AG04449 (cell line): ENCODE measurements at regions of chr7 and their contacts with region 1.

Region 1: GRCh38 chr7:44240983-44241510 is 40.3 kb downstream of the YKT6 start:
- DNase-seq: peak; percentile 5
- H3K4me3 ChIP-seq: peak overlapping the region; percentile 6; the same call in 1 of the 2 replicates
- CTCF ChIP-seq: peak; percentile 94

Region 2: DNA sequence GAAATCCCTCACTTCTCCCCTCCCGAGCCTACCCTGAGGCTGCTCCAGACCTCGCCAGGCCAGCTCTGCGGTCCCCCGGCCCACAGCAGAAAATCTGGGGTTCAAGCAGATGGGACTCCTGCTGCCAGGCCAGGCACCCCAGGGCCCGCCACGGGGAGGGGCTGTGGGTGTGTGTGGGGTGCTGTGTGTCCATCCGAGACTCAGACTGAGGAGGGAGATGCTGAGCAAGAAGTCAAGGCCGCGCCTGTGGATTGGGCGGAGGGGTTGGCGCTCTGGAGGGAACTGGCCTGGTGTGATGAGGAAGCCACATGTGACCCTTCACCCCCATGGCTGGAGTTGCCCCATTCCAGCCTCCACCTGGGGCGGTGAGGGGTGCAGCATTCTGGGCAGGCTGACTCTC is 10.8 kb after region 1 on chr7:
- CTCF ChIA-PET with region 1: interaction called, 40 read pairs
- POLR2A ChIA-PET with region 1: no interaction called
- DNase-seq: no peak
- H3K4me3 ChIP-seq: no peak overlapping the region
- CTCF ChIP-seq: no peak

Region 3: GRCh38 chr7:44307301-44307900 is 66.4 kb after region 1 on chr7:
- CTCF ChIA-PET with region 1: interaction called, 25 read pairs
- POLR2A ChIA-PET with region 1: no interaction called
- DNase-seq: peak; percentile 10
- H3K4me3 ChIP-seq: no peak overlapping the region
- CTCF ChIP-seq: peak; percentile 62

Region 4: DNA sequence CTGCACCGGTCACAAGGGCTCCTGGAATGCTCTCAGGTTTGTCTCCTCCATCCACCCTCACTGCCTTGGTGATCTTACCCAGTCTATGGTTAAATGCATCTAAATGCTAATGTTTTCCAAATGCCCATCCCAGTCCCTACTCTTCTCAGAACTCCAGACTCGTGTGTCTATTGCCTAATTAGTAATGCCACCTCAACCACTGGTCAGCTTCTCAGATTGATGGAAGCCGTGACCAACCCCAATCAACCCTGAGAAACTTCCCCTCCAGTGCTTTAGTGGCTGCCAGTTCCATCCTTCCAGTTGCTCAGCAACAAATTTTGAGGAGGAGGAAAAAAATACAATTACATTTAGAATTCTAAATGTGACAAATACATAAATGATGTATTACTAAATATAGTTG is 230.8 kb after region 1 on chr7:
- CTCF ChIA-PET with region 1: interaction called, 45 read pairs
- POLR2A ChIA-PET with region 1: no interaction called
- DNase-seq: no peak
- H3K4me3 ChIP-seq: no peak overlapping the region
- CTCF ChIP-seq: no peak

Region 5: DNA sequence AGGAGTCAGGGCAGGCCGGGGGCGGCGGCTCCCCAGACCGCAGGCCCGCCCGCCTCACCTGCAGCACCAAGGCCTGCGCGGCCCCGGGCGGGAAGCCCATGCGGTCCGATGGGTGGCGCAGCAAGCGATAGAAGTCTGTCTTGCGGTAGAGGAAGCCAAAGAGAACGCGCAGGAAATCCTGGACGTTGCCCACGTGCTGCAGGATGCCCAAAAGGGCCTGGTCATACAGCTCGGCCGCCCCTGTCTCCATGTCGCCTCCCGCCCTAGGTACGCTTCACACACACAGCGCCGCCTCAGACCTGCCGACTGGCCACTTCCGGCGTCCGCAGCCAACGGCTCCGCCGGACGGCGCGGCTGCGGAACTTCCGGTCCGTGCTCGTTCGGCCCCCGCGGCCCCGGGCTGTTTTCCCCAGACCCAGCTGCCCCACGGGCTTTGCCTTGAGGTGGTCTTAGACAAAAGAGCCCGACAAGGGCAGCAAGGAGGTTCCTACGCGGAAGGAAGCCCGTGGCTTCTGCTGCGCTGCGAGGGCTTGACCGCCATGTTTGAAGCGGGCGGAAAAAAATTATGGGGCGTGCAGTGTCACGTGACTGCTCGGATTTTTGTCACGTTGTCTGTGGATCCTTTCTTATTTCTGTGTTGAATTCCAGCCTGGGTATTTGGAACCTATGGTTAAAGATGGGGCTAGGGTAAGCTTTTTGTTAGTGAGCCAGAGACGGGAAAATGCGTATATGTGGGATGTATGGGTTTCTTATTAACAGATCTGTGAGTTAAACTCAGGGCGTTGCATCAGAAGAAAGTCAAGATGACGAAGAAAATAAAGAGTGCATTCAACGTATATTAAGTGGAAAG is 249.5 kb after region 1 on chr7 and contains the start of gene NUDCD3:
- CTCF ChIA-PET with region 1: interaction called, 16 read pairs
- POLR2A ChIA-PET with region 1: no interaction called
- DNase-seq: no peak
- H3K4me3 ChIP-seq: peak within 1 kb of the TSS; percentile 97
- CTCF ChIP-seq: no peak

Region 6: GRCh38 chr7:44573464-44574286 is 332.6 kb after region 1 on chr7 and contains the start of gene DDX56:
- CTCF ChIA-PET with region 1: interaction called, 36 read pairs
- POLR2A ChIA-PET with region 1: no interaction called
- DNase-seq: peak; percentile 40
- H3K4me3 ChIP-seq: peak within 1 kb of the TSS; percentile 98
- CTCF ChIP-seq: no peak